Natural killer cell (primary cell): ENCODE measurements at regions of chr12 and their contacts with region 1.

Region 1: GRCh38 chr12:48165094-48165981 is 8.0 kb upstream of the ASB8 start:
- DNase-seq: peak in 1 of 2 donors; percentile 89
- ATAC-seq: peak; percentile 76 to 93 (median 81)
- H3K4me3 ChIP-seq: no peak overlapping the region
- H3K4me3 Mint-ChIP-seq: no peak overlapping the region
- H3K27ac ChIP-seq: no peak overlapping the region
- H3K27ac Mint-ChIP-seq: no peak overlapping the region
- H3K4me1 ChIP-seq: no peaks in the 10 kb centered on the region
- H3K4me1 Mint-ChIP-seq: no peaks in the 10 kb centered on the region
- H3K27me3 ChIP-seq: no peaks in the 10 kb centered on the region
- H3K27me3 Mint-ChIP-seq: peaks cover 17% of the 10 kb centered on the region in 2 donors
- CTCF ChIP-seq: peak; percentile 97

Region 2: GRCh38 chr12:48084066-48084465 is 81.3 kb before region 1 on chr12:
- intact Hi-C with region 1: loop called (anchors 1 kb)
- DNase-seq: peak in 1 of 2 donors; percentile 34
- ATAC-seq: no peak
- H3K4me3 ChIP-seq: no peak overlapping the region
- H3K4me3 Mint-ChIP-seq: no peak overlapping the region
- H3K27ac ChIP-seq: no peak overlapping the region
- H3K27ac Mint-ChIP-seq: no peak overlapping the region
- H3K4me1 ChIP-seq: no peaks in the 10 kb centered on the region
- H3K4me1 Mint-ChIP-seq: no peaks in the 10 kb centered on the region
- H3K27me3 ChIP-seq: no peaks in the 10 kb centered on the region
- H3K27me3 Mint-ChIP-seq: no peaks in the 10 kb centered on the region
- CTCF ChIP-seq: no peak